Head of caudate nucleus (tissue), 42 donors: ENCODE measurements at regions of chr1 and their contacts with region 1.

Region 1: GRCh38 chr1:92030656-92031107 is 897 bp downstream of the EPHX4 start:
- DNase-seq: peak in 24 of 42 donors; percentile 16 to 72 (median 44)

Region 2: GRCh38 chr1:92043621-92044020 is 12.9 kb after region 1 on chr1:
- intact Hi-C with region 1: loop called (anchors 1 kb)
- DNase-seq: no peak

Region 3: DNA sequence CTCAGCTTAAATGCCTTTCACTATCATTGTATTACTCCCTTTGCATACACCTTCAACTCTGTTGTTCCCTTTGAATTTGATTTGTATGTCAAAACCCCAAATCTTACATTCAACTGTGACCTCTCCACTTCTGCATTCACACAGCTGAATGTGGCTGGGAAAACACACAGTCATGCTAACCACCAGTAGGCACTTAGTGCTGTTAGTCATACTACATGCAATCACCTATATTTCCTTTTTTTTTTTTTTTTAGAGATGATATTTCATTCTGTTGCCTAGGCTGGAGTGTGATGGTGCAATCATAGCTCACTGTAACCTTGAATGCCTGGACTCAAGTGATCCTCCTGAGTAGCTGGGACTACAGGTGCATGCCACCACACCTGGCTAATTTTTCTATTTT is 65.6 kb after region 1 on chr1:
- intact Hi-C with region 1: no loop called
- DNase-seq: no peak